Activated CD4-positive, alpha-beta T cell treated with anti-CD3 and anti-CD28 coated beads for 36 hours (primary cell): ENCODE measurements at regions of chr12 and their contacts with region 1.

Region 1: DNA sequence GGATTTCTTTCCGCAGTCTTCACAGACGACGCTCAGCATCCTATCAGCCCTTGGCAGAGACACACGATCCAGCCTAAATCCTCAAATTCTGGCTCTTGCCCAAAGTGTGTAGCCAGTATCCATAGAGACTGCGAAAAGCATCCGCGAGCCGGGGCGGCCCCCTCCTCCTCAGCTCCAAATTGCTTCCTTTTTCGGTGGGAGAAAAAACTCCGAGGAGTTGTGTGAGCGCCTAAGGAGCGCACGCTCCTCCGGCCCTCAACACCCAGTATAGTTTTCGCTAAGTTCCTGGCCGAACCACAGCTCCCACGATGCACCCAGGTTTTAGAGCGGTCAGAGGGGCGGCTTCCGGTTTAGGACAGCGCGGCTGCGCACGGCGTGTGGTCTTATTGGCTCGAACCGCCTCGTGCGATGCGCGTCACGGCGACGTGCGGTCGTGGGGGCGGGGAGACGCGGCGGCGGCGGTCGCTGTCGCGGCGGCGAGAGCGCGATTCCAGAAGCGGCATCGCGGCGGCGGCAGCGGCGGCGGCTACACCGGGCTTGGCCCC is at the start of gene ADIPOR2:
- DNase-seq: peak; percentile 96
- ATAC-seq: peak; percentile 99
- H3K4me3 Mint-ChIP-seq: peak within 1 kb of the TSS; percentile 95
- H3K27ac Mint-ChIP-seq: peak within 1 kb of the TSS; percentile 97
- H3K4me1 Mint-ChIP-seq: peaks cover 47% of the 10 kb centered on the region
- H3K27me3 Mint-ChIP-seq: peaks cover 3% of the 10 kb centered on the region
- total RNA-seq, gene ADIPOR2: 51.7 to 52.6 TPM

Region 2: DNA sequence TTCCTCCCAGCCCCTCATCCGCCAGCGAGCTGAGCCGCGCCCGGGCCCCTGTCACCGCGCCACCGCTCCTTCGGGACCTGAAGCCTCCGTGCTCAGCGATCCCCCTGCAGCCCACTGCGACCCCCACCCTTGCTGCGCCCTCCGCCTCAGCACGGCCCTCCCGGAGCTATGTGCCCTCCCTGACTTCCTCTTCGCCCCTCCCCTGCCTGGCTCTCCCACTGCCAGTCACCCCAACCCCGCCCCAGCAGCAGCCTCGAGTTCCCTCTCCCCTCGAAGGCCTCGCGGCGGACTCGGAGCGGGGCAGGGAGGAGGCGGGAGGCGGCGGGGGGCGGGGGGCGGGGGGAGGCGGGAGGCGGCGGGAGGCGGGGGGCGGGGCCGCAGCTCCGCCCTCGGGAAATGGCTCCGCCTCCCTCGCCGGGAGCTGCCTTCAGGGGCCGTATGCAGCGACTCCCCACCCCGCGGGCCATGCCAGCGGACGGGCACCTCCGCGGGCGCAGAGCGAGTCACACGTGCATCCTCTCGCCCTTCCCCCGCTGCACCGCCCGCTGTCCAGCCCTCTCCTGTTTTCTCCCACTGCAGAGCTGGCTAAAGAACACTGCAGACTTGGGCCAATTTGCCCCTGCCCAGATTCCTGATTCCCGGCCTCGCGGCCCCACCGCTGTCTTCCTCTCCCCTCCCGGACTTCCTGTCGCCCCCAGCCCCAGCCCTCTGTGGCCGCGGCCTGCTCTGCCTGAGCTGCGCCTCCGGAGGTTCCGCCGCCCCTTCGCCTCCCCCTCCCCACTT is 28.9 kb before region 1 on chr12:
- CTCF ChIA-PET with region 1: interaction called, 3 read pairs
- POLR2A ChIA-PET with region 1: interaction called, 3 read pairs
- intact Hi-C with region 1: loop called in 1 of 2 experiments (anchors 1 kb)
- DNase-seq: peak; percentile 93
- ATAC-seq: peak; percentile 94
- H3K4me3 Mint-ChIP-seq: peak overlapping the region; percentile 73
- H3K27ac Mint-ChIP-seq: peak overlapping the region; percentile 76
- H3K4me1 Mint-ChIP-seq: peaks cover 36% of the 10 kb centered on the region
- H3K27me3 Mint-ChIP-seq: no peaks in the 10 kb centered on the region

Region 3: GRCh38 chr12:2453076-2453760 is 762.6 kb after region 1 on chr12:
- CTCF ChIA-PET with region 1: no interaction called
- POLR2A ChIA-PET with region 1: no interaction called
- intact Hi-C with region 1: no loop called
- DNase-seq: no peak
- ATAC-seq: no peak
- H3K4me3 Mint-ChIP-seq: no peak overlapping the region
- H3K27ac Mint-ChIP-seq: no peak overlapping the region
- H3K4me1 Mint-ChIP-seq: no peaks in the 10 kb centered on the region
- H3K27me3 Mint-ChIP-seq: no peaks in the 10 kb centered on the region

Region 4: DNA sequence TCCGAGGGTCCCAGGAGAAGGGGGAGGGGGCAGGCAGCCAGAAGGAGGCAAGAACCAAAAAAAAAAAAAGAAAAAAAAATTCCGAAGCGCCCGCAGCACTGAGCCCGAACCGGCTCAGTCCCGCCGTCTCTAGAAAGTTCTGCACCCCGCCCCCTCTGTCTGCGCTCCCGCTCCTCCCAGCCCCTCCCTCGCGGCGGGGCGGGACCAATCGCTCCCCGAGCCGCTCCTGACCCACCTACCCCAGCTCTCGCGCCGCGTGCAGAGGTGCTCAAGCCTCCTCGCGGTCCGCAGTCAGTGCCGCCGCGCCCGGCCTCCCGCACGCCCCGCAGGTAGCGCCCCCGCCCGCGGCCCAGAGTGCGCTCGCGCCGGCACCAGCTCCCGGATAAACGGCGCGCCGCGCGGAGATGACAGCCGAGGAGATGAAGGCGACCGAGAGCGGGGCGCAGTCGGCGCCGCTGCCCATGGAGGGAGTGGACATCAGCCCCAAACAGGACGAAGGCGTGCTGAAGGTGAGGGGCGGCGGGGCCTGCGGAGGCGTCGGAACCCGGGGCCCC is 1104.2 kb after region 1 on chr12 and contains the start of gene FKBP4:
- CTCF ChIA-PET with region 1: no interaction called
- POLR2A ChIA-PET with region 1: no interaction called
- intact Hi-C with region 1: loop called in 1 of 2 experiments (anchors 10 kb)
- DNase-seq: peak; percentile 95
- ATAC-seq: peak; percentile 90
- H3K4me3 Mint-ChIP-seq: peak within 1 kb of the TSS; percentile 90
- H3K27ac Mint-ChIP-seq: peak within 1 kb of the TSS; percentile 67
- H3K4me1 Mint-ChIP-seq: peaks cover 20% of the 10 kb centered on the region
- H3K27me3 Mint-ChIP-seq: no peaks in the 10 kb centered on the region
- total RNA-seq, gene FKBP4: 129 to 182 TPM